AG04449 (cell line): ENCODE measurements at regions of chr3 and their contacts with region 1.

Region 1: GRCh38 chr3:47420511-47421484 is 40.0 kb downstream of the PTPN23 start:
- DNase-seq: peak; percentile 29
- H3K4me3 ChIP-seq: no peak overlapping the region
- CTCF ChIP-seq: peak; percentile 96

Region 2: GRCh38 chr3:47404955-47405790 is 15.6 kb before region 1 on chr3:
- CTCF ChIA-PET with region 1: interaction called, 75 read pairs
- POLR2A ChIA-PET with region 1: interaction called, 4 read pairs
- DNase-seq: no peak
- H3K4me3 ChIP-seq: no peak overlapping the region
- CTCF ChIP-seq: no peak

Region 3: DNA sequence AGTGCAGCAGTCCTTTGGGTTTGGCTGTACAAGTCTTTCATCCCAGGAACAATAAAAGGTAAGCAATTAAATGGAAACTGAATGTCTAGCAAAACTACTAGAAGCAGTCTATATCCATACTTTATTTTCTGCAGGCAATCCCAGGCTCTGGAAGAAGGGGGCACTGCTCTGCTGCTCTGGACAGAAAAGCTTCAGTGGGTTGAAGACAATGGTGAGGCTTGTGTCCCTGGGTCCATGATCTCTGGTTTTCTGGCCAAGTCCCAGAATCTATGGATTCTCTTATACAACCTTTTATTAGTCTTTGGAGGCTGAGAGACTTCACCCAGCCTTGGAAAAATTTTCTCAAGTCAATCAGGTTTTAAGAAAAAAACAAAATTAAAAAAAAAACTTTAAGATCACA is 19.3 kb after region 1 on chr3:
- CTCF ChIA-PET with region 1: interaction called, 43 read pairs
- POLR2A ChIA-PET with region 1: no interaction called
- DNase-seq: no peak
- H3K4me3 ChIP-seq: no peak overlapping the region
- CTCF ChIP-seq: peak; percentile 27

Region 4: DNA sequence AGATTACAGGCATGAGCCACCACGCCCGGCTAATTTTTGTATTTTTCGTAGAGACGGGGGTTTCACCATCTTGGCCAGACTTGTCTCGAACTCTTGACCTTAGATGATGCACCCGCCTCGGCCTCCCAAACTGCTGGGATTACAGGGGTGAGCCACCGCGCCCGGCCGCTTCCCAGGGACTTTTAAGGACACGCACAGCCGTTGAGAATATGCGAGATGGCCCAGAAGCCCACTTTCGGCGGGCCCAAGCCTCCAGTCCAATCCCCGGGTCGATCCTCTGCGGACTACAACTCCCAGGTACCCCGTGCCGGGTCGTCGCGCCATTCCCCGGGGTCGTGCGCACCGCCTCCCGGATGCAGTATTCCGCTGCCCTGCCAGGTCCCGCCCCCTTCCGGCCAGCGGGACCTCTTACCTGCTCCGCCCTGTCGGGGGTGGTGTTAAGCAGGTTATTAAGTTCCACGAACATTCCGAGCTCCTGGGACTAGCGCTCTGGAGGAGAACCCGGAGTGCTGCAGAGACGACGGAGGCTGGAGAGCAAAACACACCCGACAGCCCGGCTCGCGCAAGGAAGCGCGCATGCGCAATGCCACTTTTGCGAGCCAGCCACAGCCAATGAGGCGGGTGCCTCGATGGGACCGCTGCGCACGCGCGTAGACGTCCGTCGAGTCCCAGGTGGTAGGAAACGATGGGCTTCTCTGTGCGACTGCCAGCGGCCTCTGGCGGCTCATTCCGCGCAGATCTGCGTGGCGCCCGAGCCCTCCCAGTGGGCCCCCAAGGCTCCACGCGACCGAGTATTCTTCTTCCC is 92.5 kb after region 1 on chr3 and contains the start of gene ELP6:
- CTCF ChIA-PET with region 1: interaction called, 19 read pairs
- POLR2A ChIA-PET with region 1: no interaction called
- DNase-seq: peak; percentile 63
- H3K4me3 ChIP-seq: peak within 1 kb of the TSS; percentile 93
- CTCF ChIP-seq: peak; percentile 63

Region 5: DNA sequence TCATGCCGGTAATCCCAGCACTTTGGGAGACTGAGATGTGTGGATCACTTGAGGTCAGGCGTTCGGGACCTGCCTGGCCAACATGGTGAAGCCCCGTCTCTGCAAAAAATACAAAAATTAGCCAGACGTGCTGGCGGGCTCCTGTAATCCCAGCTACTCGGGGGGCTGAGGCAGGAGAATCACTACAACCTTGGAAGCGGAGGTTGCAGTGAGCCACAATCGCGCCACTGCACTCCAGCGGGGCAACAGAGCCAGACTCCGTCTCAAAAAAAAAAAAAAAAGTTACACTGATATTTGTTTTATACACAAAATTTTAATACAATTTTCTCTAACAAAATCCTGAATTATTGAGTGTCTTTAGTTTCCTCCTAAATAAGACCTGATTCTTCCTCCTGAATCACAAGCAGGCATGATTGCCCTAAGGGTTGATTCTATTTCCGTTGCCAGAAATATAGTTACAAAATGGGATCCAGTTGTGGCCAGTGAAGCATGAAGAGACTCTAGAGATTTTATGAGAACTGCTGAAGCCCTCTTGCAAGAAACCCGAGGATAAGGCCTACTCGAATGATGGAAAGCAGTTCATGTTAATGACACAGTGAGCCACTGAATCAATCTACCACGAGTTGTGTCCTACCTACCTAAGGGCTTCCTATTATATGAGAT is 370.5 kb after region 1 on chr3:
- CTCF ChIA-PET with region 1: interaction called, 14 read pairs
- POLR2A ChIA-PET with region 1: no interaction called
- DNase-seq: no peak
- H3K4me3 ChIP-seq: no peak overlapping the region
- CTCF ChIP-seq: no peak